ENCODE measurements at regions of chr15 and their contacts with region 1.

Region 1: DNA sequence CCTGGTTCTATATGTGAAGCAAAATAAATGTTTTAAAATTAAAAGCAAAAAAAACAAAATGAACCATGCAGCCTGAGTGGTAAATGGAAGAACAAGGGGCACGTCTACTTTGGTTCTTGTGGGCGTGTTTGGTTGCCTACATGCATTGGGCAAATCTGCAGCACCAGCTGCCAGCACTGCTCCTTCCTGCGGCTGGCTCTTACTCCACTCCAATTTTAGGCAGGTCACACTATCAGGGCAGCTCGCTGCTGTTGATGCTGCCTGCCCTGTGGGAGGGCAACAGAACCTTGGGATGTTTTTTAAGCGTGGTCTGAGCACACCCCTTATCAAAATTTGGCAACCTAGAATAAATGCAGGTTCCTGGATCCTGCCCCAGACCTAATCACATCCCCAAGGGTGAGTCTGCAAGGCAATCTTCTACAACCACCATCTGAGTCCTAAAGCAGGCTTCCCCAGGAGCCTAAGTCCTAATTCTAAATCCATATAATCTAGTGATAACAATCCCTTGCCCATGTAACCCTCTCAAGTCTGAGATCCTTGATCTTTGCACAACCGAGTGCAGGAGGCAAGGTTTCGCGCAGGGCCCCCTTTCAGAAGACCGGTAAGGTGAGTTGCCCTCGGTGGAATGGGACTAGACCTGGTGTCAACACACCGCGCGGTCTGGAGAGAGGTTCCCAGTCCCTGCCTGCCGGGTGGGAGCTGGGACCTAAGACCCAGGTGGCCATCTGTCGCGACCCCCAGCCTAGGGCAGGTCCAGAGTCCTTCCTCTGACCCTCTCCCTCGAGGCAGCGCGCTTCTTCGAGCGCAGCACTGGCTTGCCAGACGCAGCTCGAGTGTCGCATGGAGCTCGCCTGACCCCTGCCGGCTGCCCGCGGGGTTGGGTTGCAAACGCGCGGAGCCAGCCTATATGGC is 15.9 kb downstream of the IVD start:
- DNase-seq: peak; percentile 79 to 93 (median 93)
- ATAC-seq: peak; percentile 90 to 93
- H3K4me3 ChIP-seq: no peak overlapping the region
- H3K27ac ChIP-seq: peak overlapping the region; percentile 24
- H3K4me1 ChIP-seq: no peaks in the 10 kb centered on the region
- H3K27me3 ChIP-seq: no peaks in the 10 kb centered on the region

Region 2: DNA sequence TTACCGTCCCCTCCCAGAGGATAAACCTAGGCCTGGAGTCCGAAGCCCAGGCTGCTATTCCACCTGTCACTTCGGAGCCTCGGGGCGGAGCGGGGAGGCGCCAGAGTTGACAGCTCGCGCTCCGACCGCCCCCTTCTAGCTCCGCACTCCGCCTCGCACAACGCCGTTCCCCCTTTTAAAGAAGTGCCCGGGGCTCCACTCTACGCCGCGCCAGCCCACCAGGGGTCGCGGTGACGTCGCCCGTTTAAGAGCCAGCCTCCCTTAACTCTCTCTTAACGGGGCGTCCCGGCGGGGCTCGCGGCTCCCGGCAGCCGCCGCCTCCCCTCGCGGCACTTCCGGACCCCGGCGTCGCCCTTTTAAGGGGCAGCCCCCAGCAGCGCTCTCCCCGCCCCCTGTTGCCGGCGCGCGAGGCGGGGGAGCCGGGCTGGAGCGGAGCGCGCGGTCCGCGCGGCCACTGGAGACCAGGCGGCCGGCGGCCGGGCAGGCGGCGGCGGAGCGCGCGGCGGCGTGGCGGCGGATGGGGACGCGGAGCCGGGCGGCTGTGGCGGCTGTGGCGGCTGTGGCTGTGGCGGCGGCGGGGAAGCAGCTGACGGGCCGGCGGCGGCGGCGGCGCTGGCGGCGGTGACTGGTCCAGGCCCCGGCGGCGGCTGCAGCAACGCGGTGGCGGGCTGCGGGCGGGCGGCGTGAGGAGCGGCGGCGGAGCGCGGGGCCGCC is 98.1 kb before region 1 on chr15 and contains the start of gene INAFM2:
- intact Hi-C with region 1: loop called in 3 of 4 experiments (anchors 2 to 5 kb)
- DNase-seq: peak; percentile 94 to 97 (median 97)
- ATAC-seq: peak; percentile 92
- H3K4me3 ChIP-seq: peak within 1 kb of the TSS; percentile 76
- H3K27ac ChIP-seq: peak within 1 kb of the TSS; percentile 92
- H3K4me1 ChIP-seq: peaks cover 11% of the 10 kb centered on the region
- H3K27me3 ChIP-seq: no peaks in the 10 kb centered on the region
- total RNA-seq, gene INAFM2: 72.6 to 115 (median 74.1) TPM

Region 3: DNA sequence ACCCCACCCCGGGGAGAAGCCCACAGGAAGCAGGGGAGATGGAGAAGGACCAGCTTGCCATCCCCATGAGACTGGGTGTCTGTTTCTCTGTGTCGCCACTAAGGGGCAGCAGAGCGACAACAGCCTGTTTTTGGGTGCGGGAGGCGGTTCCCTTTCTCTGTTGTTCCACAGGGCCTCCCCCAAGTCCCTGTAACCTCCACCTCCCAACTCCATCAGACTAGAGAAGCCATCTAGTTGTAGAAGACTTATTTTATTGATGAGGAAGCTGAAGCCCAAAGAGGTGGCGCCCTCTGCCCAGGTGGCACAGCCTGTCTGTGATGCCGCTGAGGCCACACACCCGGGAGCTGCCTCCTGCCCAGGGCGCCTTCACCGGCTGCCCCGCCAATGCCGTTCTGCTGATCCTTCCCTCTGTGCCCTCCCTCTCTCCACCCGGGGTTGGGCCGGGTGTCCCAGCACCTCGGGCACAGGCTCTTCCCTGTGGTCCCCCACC is 76.8 kb before region 1 on chr15:
- intact Hi-C with region 1: loop called in 1 of 4 experiments (anchors 5 kb)
- DNase-seq: peak; percentile 61 to 81 (median 81)
- ATAC-seq: peak in 1 of 2 donors; percentile 9
- H3K4me3 ChIP-seq: no peak overlapping the region
- H3K27ac ChIP-seq: no peak overlapping the region
- H3K4me1 ChIP-seq: peaks cover 10% of the 10 kb centered on the region
- H3K27me3 ChIP-seq: no peaks in the 10 kb centered on the region

Region 4: DNA sequence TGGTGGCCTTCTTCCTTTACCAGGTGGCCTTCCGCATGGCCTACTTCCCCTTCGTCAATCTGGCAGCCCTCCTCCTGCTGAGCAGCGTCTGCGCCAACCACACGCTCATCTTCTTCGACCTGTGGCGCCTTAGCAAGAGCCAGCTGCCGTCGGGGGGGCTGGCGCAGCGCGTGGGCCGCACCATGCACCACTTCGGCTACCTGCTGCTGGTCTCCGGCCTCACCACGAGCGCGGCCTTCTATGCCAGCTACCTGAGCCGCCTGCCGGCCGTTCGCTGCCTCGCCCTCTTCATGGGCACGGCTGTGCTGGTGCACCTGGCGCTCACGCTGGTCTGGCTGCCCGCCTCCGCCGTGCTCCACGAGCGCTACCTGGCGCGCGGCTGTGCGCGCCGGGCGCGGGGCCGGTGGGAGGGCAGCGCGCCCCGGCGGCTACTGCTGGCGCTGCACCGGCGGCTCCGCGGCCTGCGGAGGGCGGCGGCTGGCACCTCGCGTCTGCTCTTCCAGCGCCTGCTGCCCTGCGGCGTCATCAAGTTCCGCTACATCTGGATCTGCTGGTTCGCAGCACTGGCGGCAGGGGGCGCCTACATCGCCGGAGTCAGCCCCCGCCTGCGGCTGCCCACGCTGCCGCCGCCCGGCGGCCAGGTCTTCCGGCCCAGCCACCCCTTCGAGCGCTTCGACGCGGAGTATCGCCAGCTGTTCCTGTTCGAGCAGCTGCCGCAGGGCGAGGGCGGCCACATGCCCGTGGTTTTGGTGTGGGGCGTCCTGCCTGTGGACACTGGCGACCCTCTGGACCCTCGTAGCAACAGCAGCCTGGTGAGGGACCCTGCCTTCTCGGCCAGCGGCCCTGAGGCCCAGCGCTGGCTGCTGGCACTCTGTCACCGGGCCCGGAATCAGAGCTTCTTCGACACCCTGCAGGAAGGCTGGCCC is 53.6 kb before region 1 on chr15:
- intact Hi-C with region 1: loop called in 2 of 4 experiments (anchors 10 kb)
- DNase-seq: peak; percentile 85 to 93 (median 92)
- ATAC-seq: peak; percentile 73 to 79
- H3K4me3 ChIP-seq: no peak overlapping the region
- H3K27ac ChIP-seq: peak overlapping the region; percentile 86
- H3K4me1 ChIP-seq: peaks cover 15% of the 10 kb centered on the region
- H3K27me3 ChIP-seq: no peaks in the 10 kb centered on the region

Measured in right cardiac atrium (tissue), 5 donors.